Ovary (tissue), 10 donors: ENCODE measurements at regions of chr11 and their contacts with region 1.

Region 1: DNA sequence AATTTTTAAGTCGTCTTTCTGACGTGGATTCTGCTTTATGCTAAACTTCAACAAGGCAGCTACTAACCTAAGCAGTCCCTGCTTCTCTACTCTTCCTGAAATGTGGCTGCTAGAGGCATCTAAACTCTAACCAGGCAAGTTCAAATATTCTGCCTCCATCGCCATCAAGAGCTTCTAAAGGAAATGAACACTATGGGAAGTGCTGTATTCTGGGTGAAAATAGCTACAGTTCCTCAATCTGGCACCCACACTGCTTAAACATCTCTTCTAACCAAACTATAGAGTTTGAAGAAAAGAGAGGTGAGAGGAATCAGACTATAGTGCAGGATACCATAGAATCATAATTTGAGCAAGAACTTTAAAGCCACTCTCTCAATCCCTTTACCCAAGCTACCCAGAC is 6.3 kb downstream of the NRIP3 start:
- DNase-seq: no peak
- H3K4me3 ChIP-seq: no peak overlapping the region
- H3K27ac ChIP-seq: no peak overlapping the region
- H3K4me1 ChIP-seq: no peaks in the 10 kb centered on the region
- H3K27me3 ChIP-seq: no peaks in the 10 kb centered on the region
- CTCF ChIP-seq: no peak
- EP300 ChIP-seq: no peak
- POLR2A ChIP-seq: no peak

Region 2: GRCh38 chr11:9060700-9061111 is 63.3 kb after region 1 on chr11:
- intact Hi-C with region 1: no loop called
- DNase-seq: no peak
- H3K4me3 ChIP-seq: no peak overlapping the region
- H3K27ac ChIP-seq: no peak overlapping the region
- H3K4me1 ChIP-seq: no peaks in the 10 kb centered on the region
- H3K27me3 ChIP-seq: no peaks in the 10 kb centered on the region
- CTCF ChIP-seq: no peak
- EP300 ChIP-seq: no peak
- POLR2A ChIP-seq: no peak

Region 3: DNA sequence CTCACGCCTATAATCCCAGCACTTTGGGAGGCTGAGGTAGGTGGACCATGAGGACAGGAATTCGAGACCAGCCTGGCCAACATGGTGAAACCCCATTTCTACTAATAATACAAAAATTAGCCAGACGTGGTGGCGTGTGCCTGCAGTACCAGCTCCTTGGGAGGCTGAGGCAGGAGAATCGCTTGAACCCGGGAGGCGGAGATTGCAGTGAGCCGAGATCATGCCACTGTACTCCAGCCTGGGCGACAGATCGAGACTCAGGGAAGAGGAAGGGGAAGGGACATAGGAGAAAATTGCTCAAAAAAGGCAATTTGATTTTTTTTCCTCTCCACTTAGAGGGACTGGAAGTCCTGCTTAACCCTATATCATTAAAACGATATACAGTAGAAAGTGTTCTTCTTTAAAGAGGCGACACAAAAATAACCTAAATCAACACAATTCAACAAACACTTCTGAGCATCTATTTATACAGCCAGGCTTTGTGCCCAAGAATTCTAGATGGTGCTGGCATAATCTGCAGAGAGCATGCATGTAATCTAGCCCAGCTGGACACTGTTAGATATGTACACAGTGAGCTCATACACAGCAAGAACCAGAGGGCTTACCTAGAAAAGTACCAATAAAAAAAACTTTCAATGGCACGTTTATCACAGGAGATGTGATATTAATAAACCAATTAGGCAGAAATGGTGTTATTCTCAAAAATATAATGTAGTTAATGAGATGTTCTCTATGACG is 288.6 kb after region 1 on chr11:
- intact Hi-C with region 1: no loop called
- DNase-seq: no peak
- H3K4me3 ChIP-seq: no peak overlapping the region
- H3K27ac ChIP-seq: no peak overlapping the region
- H3K4me1 ChIP-seq: no peaks in the 10 kb centered on the region
- H3K27me3 ChIP-seq: no peaks in the 10 kb centered on the region
- CTCF ChIP-seq: no peak
- EP300 ChIP-seq: no peak
- POLR2A ChIP-seq: no peak

Region 4: GRCh38 chr11:9914064-9914463 is 916.6 kb after region 1 on chr11:
- intact Hi-C with region 1: loop called in 1 of 4 experiments (anchors 10 kb)
- DNase-seq: no peak
- H3K4me3 ChIP-seq: no peak overlapping the region
- H3K27ac ChIP-seq: no peak overlapping the region
- H3K4me1 ChIP-seq: no peaks in the 10 kb centered on the region
- H3K27me3 ChIP-seq: no peaks in the 10 kb centered on the region
- CTCF ChIP-seq: no peak
- EP300 ChIP-seq: no peak
- POLR2A ChIP-seq: no peak